ENCODE measurements at regions of chr1 and their contacts with region 1.

Region 1: DNA sequence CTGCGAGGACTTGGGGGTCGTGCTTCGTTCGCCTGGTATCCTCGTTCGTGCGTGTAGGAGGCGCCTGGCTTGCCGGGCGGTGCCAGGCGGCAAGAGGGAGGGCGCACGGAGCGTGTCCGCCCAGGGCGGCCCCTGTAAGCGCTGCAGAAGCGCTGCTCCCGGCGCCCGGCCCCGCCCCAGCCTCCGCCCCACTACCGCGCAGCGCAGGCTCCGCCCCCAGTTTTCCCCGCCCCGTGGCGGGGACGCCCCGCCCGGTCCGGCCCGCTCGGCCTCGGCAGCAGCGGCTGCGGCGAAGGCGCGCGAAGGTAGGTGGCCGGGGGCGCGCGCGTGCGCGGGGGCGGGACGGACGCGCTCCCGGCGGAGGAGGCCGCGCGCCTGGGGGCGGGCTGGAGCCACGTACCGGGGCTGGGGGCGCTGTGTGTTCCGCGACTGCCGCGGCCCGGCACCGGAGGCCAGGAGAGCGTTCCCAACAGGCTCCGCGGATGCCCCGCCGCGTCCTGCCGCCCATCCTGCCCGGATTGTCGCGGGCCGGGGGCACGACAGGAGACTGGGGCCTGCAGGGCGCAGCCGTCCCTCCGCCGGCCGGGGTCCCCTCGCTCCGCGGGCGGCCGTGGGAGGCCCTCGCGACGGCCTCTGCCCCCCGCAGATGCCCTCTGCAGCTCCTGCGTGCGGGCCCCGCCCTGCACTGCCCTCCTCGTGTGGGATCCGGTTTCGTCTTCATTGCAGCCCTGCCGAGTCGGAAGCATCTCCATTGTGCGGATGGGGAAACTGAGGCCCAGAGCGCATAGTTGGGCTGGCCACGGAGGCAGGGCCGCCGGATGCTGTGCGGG is 7.7 kb upstream of the CROCC start:
- DNase-seq: peak; percentile 97
- H3K4me3 Mint-ChIP-seq: peak overlapping the region; percentile 94
- H3K27ac Mint-ChIP-seq: peak overlapping the region; percentile 89
- H3K4me1 Mint-ChIP-seq: peaks cover 28% of the 10 kb centered on the region
- H3K27me3 Mint-ChIP-seq: peaks cover 10% of the 10 kb centered on the region

Region 2: DNA sequence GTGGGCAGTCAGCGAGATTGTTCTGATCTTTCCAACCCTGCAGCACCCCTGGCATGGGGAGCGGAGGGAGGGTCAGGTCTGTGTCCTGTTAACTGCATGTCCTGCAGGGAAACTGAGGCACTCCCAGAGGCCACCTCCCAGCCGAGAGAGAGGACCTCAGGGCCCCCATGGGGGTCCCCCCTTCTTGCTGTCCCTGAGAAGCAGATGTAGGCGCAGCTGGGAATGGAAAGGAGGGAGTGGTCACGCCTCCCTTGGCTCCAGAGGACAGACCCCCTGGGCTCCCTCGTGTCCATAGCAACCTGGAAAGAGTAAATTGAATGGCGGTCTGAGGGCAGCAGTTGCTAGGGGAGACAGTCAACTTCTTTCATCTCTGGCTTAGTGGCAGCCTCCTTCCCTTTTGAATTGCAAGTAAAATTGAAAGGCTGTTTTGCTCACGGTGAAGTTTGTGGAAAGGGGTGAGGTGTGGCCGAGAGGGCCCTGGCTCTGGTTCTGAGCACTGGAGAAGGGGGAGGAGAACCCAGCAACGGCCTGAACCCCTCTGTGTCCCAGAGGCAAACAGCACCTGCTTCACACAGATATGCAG is 12.5 kb after region 1 on chr1:
- intact Hi-C with region 1: no loop called
- DNase-seq: no peak
- H3K4me3 Mint-ChIP-seq: no peak overlapping the region
- H3K27ac Mint-ChIP-seq: no peak overlapping the region
- H3K4me1 Mint-ChIP-seq: peaks cover 12% of the 10 kb centered on the region
- H3K27me3 Mint-ChIP-seq: no peaks in the 10 kb centered on the region

Region 3: GRCh38 chr1:16960560-16961296 is 46.7 kb after region 1 on chr1:
- intact Hi-C with region 1: no loop called
- DNase-seq: peak; percentile 95
- H3K4me3 Mint-ChIP-seq: peak overlapping the region; percentile 76
- H3K27ac Mint-ChIP-seq: peak overlapping the region; percentile 62
- H3K4me1 Mint-ChIP-seq: peaks cover 9% of the 10 kb centered on the region
- H3K27me3 Mint-ChIP-seq: no peaks in the 10 kb centered on the region

Region 4: GRCh38 chr1:17011439-17012307 is 97.6 kb after region 1 on chr1 and contains the start of gene ATP13A2:
- intact Hi-C with region 1: loop called (anchors 5 kb)
- DNase-seq: peak; percentile 96
- H3K4me3 Mint-ChIP-seq: peak within 1 kb of the TSS; percentile 86
- H3K27ac Mint-ChIP-seq: peak within 1 kb of the TSS; percentile 68
- H3K4me1 Mint-ChIP-seq: peaks cover 18% of the 10 kb centered on the region
- H3K27me3 Mint-ChIP-seq: no peaks in the 10 kb centered on the region
- total RNA-seq, gene ATP13A2: 46.9 and 50.2 TPM in 2 replicates